ENCODE measurements at regions of chr6 and their contacts with region 1.

Region 1: DNA sequence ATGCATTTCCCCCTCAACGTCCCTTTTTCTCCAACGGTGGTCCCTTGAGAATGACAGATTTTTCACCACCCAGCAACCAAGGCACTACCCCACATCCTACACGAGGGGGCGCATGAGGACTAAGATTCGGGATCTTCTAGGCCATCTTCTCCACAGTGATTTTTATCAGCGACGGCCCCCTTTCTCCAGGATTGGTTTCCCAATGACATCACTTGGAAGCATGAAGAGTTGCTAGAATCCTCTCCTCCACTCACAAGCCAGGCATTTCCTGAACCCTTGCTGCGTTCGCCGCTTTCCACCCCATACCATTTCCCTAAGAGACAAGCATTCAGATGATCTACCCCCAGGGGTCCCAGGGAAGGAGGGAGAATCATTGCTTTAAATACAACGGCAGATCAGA is 252.0 kb downstream of the HIVEP2 start:
- DNase-seq: peak; percentile 65
- ATAC-seq: peak; percentile 25
- H3K4me3 ChIP-seq: no peak overlapping the region
- H3K27ac ChIP-seq: peak overlapping the region; percentile 42
- H3K4me1 ChIP-seq: peaks cover 32% of the 10 kb centered on the region
- H3K27me3 ChIP-seq: no peaks in the 10 kb centered on the region
- CTCF ChIP-seq: peak; percentile 88

Region 2: DNA sequence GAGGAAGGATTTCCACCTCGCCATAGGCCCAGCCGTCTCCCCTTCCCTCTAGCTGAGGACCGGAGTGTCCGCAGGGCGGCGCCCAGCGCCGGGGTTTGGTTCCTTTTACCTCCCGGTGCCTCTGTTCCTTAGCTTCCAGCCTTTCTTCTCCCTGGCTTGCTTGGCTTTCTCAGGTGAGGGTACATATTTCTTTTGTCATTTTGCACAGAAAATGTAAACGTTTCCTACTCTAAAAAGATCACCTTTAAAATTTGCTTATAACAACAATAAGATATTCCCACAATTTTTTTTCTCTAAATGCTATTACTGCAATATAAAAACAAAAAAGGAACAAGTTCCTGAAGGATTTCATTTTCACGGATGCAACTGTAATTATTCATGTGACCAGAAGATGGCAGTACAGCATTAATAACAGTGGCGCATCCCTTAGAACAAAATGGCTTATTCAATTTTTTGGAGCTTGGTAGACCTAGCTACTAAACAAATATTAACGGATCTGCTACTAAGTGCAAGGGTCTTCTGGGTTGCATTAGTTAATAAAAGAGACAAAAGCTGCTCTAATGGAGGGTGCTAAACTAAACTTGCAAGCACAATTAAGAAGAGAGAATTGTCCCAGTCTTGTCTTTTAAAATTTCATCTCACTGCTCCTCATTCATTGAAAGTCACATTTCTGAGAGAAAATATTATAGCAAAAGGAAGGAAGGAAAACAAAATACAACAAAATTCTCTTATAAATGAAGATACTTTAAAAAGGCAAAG is 218.2 kb before region 1 on chr6:
- CTCF ChIA-PET with region 1: interaction called, 4 read pairs
- POLR2A ChIA-PET with region 1: no interaction called
- intact Hi-C with region 1: loop called (anchors 5 kb)
- DNase-seq: peak; percentile 78
- ATAC-seq: peak; percentile 97
- H3K4me3 ChIP-seq: peak overlapping the region; percentile 48; the same call in 1 of the 2 replicates
- H3K27ac ChIP-seq: 0 out of 2 replicates have a peak overlapping the region, but pooled peaks have one; percentile 2
- H3K4me1 ChIP-seq: no peaks in the 10 kb centered on the region
- H3K27me3 ChIP-seq: no peaks in the 10 kb centered on the region
- CTCF ChIP-seq: peak; percentile 78

Region 3: DNA sequence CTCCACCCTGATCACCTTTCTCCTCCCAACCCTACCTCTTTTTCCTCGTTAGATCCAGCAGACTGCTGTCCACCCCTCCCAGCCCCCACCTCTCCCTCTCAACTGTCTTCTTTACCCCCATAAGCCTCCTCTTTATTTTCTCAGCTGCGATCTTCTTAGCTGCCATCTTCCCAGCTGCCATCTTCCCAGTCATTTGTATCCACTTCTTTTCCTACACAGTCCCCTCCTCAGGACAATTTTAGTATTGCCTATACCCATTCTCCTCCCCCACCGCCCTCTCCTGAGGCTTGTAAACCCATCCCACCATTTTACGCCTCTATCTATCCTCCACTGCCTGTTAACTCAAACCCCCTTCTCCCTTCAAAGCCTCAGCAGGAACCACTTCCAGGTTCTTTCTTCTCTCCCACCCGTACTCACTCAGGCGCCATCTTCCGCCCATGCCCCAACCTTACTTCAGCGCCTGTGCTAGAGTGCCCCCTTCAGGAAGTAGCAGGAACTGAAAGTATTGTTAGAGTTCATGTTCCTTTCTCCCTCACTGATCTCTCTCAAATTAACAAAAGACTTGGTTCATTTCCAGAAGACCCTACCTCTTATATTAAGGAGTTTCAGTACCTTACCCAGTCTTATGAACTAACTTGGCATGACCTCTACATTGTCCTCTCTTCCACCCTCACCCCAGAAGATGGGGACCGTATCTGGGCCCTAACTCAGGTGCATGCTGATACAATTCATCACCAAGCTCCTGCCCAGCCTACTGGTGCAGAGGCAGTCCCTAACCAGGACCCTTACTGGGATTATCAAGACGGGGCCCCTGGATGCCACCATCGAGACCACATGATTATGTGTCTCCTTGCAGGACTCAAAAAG is 155.1 kb before region 1 on chr6:
- CTCF ChIA-PET with region 1: no interaction called
- POLR2A ChIA-PET with region 1: no interaction called
- intact Hi-C with region 1: no loop called
- DNase-seq: peak; percentile 52
- ATAC-seq: no peak
- H3K4me3 ChIP-seq: no peak overlapping the region
- H3K27ac ChIP-seq: no peak overlapping the region
- H3K4me1 ChIP-seq: peaks cover 8% of the 10 kb centered on the region; the same call in 1 of the 2 replicates
- H3K27me3 ChIP-seq: no peaks in the 10 kb centered on the region
- CTCF ChIP-seq: peak; percentile 67

Region 4: DNA sequence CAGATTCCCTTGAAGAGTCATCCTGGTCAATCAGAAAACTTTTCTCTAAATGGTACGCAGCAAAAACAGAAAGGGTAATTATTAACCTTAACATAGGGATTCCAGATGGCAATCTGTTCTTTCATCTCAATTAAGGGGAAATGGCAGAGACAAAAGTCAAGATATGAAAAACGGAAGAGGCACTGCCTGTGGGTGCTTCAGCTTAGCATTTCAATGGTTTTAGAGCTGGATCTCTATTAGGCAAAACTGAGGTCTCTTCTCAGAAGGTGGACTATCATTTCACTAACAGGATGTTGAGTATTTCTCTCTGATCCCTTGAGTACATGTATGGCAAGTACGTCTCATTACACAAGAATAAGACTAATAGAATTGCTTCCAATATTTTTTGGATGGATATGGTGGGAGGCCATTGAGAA is 44.9 kb before region 1 on chr6:
- CTCF ChIA-PET with region 1: no interaction called
- POLR2A ChIA-PET with region 1: no interaction called
- intact Hi-C with region 1: no loop called
- DNase-seq: no peak
- ATAC-seq: no peak
- H3K4me3 ChIP-seq: no peak overlapping the region
- H3K27ac ChIP-seq: no peak overlapping the region
- H3K4me1 ChIP-seq: no peaks in the 10 kb centered on the region
- H3K27me3 ChIP-seq: no peaks in the 10 kb centered on the region
- CTCF ChIP-seq: no peak

Region 5: DNA sequence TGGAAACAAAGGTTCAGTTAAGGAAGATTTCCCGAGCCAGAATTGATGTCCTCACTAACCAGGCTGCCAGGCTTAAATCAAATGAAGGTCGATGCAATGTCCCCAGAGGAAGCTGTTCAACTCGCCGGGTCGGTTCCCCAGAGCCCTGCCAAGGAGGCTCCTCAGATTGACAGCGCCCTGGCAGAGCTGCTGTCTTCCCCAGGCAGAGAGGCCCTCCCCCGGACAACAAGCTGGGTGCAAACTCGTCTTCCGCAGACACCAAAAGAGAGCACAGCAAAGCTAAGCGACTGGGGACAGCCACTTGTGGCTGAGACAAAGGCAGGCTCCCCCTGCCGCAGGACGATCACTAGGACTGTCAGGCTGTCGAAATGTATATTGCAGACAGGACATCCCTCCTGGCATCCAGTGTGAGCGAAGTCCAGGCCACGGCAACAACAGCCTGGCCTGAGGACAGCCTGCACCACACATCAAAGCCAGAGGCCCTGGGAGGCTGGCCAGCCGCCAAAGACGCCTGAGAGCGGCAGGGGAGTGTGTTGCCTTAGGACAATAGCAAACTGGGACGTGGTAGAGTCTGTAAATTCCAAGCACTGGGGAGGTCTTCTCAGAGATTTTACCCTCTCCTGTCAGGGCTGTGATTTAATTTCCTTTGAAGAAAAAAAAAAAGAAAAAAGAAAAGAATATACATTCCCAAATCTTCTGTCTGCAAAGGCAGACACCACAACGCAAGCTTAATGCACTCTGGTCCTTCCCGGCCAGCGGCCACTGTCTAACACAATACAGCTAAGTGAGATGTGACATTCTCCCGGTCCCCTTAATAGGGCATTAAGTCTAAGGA is 152.9 kb after region 1 on chr6:
- CTCF ChIA-PET with region 1: no interaction called
- POLR2A ChIA-PET with region 1: interaction called, 3 read pairs
- intact Hi-C with region 1: loop called (anchors 10 kb)
- DNase-seq: peak; percentile 80
- ATAC-seq: peak; percentile 52
- H3K4me3 ChIP-seq: peak overlapping the region; percentile 64
- H3K27ac ChIP-seq: peak overlapping the region; percentile 98
- H3K4me1 ChIP-seq: peaks cover 72% of the 10 kb centered on the region
- H3K27me3 ChIP-seq: no peaks in the 10 kb centered on the region
- CTCF ChIP-seq: no peak

Region 6: DNA sequence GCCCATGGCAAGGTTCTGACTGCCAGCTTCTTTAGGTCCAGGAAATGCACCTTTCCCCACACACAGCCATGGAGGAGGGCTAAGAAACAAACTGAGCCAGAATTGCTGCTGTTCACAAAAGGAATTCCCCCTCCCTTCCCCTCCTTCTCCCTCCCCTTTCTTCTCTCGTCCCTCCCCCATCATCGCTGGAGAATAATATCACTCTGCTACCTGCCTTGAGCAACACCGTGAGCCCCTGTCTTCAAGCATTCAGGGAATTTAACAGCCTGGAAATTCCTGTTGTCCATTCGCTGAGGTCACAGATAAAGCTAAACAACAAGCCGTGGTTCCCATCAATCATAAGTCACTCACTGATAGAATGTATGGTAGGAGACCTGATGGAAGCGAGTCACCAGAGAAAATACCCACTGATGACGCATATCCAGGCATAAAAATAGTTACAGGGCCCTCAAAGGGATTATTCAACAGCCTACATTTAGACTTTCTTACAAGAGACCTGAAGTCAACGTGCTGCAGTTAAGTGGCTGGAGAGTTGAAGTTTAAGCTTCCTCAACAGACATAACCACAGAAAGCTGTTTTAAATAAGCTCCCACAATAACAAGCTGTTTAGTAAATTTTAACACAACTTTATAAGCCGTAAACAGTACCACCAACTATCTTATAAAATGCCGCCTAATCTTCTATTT is 192.4 kb after region 1 on chr6:
- CTCF ChIA-PET with region 1: no interaction called
- POLR2A ChIA-PET with region 1: no interaction called
- intact Hi-C with region 1: loop called (anchors 10 kb)
- DNase-seq: peak; percentile 94
- ATAC-seq: peak; percentile 90
- H3K4me3 ChIP-seq: peak overlapping the region; percentile 26; the same call in 1 of the 2 replicates
- H3K27ac ChIP-seq: peak overlapping the region; percentile 96
- H3K4me1 ChIP-seq: peaks cover 38% of the 10 kb centered on the region
- H3K27me3 ChIP-seq: no peaks in the 10 kb centered on the region
- CTCF ChIP-seq: no peak

Region 7: DNA sequence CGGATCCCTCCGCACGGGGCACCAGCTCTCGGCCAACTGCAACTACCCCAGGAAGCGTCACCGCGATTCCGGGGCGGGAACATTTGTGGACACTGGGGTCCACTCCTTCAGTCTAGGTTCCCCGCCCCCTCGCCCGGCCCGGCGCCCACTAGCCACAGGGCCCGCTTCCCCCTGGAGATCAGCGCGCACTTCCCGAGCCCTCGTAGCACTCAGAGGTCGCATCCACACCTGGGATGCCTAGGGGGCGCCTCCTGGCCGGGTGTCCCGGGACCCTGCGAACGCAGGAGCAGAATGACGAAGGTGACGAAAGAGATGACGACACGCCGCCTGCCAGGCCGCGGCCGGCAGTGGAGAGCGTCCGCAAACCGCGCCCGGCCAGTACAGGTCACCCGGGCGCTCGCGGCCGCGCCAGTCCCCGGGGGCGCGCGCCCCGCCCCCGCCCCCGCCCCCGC is 367.4 kb after region 1 on chr6:
- CTCF ChIA-PET with region 1: no interaction called
- POLR2A ChIA-PET with region 1: no interaction called
- intact Hi-C with region 1: loop called (anchors 10 kb)
- DNase-seq: peak; percentile 67
- ATAC-seq: peak; percentile 73
- H3K4me3 ChIP-seq: peak overlapping the region; percentile 90
- H3K27ac ChIP-seq: peak overlapping the region; percentile 89
- H3K4me1 ChIP-seq: peaks cover 22% of the 10 kb centered on the region
- H3K27me3 ChIP-seq: no peaks in the 10 kb centered on the region
- CTCF ChIP-seq: peak; percentile 20; the same call in 1 of the 2 replicates

Region 8: GRCh38 chr6:143337201-143337949 is 644.4 kb after region 1 on chr6:
- CTCF ChIA-PET with region 1: no interaction called
- POLR2A ChIA-PET with region 1: no interaction called
- intact Hi-C with region 1: loop called (anchors 5 kb)
- DNase-seq: peak; percentile 37
- ATAC-seq: no peak
- H3K4me3 ChIP-seq: no peak overlapping the region
- H3K27ac ChIP-seq: peak overlapping the region; percentile 100
- H3K4me1 ChIP-seq: peaks cover 61% of the 10 kb centered on the region
- H3K27me3 ChIP-seq: no peaks in the 10 kb centered on the region
- CTCF ChIP-seq: peak; percentile 62

Measured in PC-3 (cell line).